ENCODE measurements at regions of chr3 and their contacts with region 1.

Region 1: DNA sequence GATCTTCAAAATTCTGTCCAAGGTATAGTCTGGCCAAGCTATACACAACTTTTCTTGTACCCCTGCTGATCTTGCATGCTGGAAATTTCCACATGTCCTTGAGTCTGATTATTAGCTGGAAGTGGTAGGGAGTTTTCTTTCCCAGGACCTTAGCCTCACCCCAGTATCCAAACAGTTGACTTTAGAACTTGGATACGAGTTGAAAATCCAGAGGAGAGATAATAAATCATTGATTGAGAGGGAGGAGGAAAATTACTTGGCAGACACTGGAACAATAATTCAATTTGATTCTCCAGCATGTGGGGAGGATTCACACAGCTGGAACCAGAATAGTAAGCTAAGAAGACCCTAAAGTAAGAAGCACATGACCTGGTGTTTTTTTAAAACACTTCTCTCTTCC is 116.4 kb downstream of the IL5RA start:
- DNase-seq: no peak
- H3K4me3 ChIP-seq: no peak overlapping the region
- H3K27ac ChIP-seq: no peak overlapping the region
- H3K4me1 ChIP-seq: no peaks in the 10 kb centered on the region
- CTCF ChIP-seq: no peak

Region 2: GRCh38 chr3:3027976-3028567 is 34.3 kb after region 1 on chr3:
- CTCF ChIA-PET with region 1: no interaction called
- POLR2A ChIA-PET with region 1: no interaction called
- intact Hi-C with region 1: loop called (anchors 1 kb)
- DNase-seq: no peak
- H3K4me3 ChIP-seq: no peak overlapping the region
- H3K27ac ChIP-seq: no peak overlapping the region
- H3K4me1 ChIP-seq: no peaks in the 10 kb centered on the region
- CTCF ChIP-seq: no peak

Region 3: DNA sequence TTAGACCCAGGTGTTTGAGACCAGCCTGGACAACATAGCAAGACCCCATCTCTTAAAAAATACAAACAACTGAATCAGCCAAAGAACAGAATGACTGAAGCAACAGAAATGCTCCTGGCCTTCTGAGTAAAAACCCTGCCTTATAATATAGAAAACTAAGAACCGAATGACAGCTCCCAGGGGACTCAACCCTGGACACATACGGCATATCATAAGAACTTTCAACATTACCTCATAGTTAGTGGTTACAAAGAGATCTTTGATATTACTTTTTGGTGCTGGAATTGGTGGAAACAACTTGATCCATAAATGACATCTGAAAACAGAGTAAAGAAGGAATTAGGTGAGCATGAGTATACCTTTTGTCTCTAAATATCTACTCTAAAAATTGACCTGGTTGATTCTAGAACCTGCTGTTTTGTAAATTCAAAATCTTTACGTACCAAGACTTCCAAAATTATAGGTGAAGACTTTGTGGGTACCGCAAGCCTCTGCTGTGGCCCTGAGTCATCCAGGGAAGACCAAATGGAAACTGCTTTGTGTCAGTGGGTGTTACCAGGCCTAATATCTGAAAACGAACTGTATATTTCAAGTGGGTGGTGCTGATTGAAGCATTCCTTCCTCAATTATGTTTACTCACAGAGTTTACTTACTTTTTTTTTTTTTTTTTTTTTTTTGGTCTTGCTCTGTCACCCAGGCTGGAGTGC is 81.0 kb after region 1 on chr3:
- CTCF ChIA-PET with region 1: no interaction called
- POLR2A ChIA-PET with region 1: no interaction called
- intact Hi-C with region 1: no loop called
- DNase-seq: no peak
- H3K4me3 ChIP-seq: no peak overlapping the region
- H3K27ac ChIP-seq: no peak overlapping the region
- H3K4me1 ChIP-seq: no peaks in the 10 kb centered on the region
- CTCF ChIP-seq: no peak